Activated B cell treated with CpG ODN at 0.5 μM for 24 hours (primary cell): ENCODE measurements at regions of chrX and their contacts with region 1.

Region 1: DNA sequence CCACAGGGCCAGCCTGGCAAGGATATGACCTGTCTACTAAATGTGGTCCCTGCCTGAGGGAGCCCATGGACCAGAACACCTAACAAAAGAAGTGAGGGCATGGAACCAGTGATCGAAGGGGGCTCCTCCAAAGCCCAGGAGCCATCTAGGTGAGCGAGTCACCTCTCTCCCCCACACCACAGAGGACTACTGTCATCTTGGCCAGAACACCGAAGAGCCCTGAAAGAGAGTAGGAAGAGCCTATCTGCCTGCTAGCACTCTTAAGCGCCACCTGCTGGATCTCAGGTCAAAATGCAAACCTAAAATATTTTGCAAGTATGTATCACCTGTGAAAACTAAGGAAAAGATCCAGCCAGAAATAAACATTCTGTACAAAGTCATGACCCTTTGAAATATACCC is 137.9 kb upstream of the ZXDB start:
- DNase-seq: no peak
- ATAC-seq: no peak
- H3K4me3 Mint-ChIP-seq: no peak overlapping the region
- H3K27ac Mint-ChIP-seq: no peak overlapping the region
- H3K4me1 Mint-ChIP-seq: no peaks in the 10 kb centered on the region
- H3K27me3 Mint-ChIP-seq: no peaks in the 10 kb centered on the region
- CTCF ChIP-seq: no peak

Region 2: DNA sequence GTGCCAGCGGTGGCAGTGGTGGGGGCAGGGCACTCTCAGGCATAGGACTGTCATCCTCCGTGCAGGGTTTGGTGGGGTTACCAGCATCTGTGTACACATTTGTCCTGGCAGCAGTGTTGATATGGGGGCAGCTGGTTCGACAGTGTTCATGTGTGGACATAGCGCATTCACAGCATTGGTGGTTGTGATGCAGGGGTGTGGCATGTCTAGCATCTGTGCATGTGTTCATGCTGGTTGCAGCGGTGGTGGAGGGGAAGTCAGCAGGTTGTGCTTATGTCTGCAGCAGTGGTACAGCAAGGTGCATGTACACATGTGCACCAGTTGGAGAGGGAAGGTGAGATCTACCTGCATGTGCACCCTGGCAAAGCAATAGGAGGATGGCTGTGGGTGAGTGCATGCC is 62.6 kb after region 1 on chrX:
- CTCF ChIA-PET with region 1: no interaction called
- POLR2A ChIA-PET with region 1: no interaction called
- intact Hi-C with region 1: loop called (anchors 10 kb)
- DNase-seq: no peak
- ATAC-seq: no peak
- H3K4me3 Mint-ChIP-seq: no peak overlapping the region
- H3K27ac Mint-ChIP-seq: no peak overlapping the region
- H3K4me1 Mint-ChIP-seq: no peaks in the 10 kb centered on the region
- H3K27me3 Mint-ChIP-seq: no peaks in the 10 kb centered on the region
- CTCF ChIP-seq: no peak